ENCODE measurements at regions of chr1 and their contacts with region 1.

Region 1: GRCh38 chr1:206106328-206107167 is 10.6 kb downstream of the AVPR1B start:
- DNase-seq: peak; percentile 88
- ATAC-seq: peak; percentile 95
- H3K4me3 Mint-ChIP-seq: no peak overlapping the region
- H3K27ac Mint-ChIP-seq: no peak overlapping the region
- H3K4me1 Mint-ChIP-seq: no peaks in the 10 kb centered on the region
- H3K27me3 Mint-ChIP-seq: no peaks in the 10 kb centered on the region
- CTCF ChIP-seq: peak; percentile 85

Region 2: DNA sequence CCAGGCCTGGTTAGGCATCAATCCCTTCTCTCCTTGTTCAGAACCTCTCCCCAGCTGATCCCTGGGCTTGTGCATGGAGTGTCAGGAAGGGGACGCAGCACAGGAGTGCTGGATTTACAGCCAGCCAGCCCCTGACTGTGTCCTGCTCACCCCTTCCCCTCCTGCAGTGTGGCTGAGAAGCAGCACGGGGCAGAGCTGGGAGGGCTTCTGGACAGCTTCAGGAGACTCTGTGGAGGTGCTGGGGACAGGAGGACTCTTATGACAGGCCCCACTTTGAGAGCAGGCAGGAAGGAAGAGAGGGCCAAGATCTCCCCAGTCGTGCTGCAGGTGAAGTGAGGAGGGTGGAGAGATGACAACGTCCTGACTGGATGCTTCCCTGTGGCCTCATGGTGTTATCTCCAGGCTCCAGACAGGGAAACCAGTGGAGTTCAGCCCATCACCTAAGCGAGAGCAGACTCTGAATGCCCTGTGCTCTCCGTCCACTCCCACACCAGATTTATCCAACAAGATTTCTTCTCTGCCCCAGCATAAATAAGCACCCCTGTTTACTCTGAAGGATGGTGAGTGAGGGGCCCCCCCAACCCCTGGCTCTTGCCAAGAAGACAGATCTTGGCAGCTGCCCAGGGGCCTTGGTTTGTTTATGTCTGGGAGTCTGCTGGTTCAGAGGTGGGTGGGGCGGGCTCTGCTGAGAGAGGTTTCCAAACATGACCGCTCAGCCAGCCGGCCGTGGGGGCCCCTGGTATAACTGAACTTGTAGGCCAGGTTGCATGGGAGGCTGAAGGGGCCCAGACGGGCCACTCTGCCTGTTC is 857.6 kb before region 1 on chr1:
- CTCF ChIA-PET with region 1: no interaction called
- POLR2A ChIA-PET with region 1: no interaction called
- intact Hi-C with region 1: no loop called
- DNase-seq: no peak
- ATAC-seq: no peak
- H3K4me3 Mint-ChIP-seq: no peak overlapping the region
- H3K27ac Mint-ChIP-seq: no peak overlapping the region
- H3K4me1 Mint-ChIP-seq: peaks cover 6% of the 10 kb centered on the region
- H3K27me3 Mint-ChIP-seq: no peaks in the 10 kb centered on the region
- CTCF ChIP-seq: no peak

Region 3: DNA sequence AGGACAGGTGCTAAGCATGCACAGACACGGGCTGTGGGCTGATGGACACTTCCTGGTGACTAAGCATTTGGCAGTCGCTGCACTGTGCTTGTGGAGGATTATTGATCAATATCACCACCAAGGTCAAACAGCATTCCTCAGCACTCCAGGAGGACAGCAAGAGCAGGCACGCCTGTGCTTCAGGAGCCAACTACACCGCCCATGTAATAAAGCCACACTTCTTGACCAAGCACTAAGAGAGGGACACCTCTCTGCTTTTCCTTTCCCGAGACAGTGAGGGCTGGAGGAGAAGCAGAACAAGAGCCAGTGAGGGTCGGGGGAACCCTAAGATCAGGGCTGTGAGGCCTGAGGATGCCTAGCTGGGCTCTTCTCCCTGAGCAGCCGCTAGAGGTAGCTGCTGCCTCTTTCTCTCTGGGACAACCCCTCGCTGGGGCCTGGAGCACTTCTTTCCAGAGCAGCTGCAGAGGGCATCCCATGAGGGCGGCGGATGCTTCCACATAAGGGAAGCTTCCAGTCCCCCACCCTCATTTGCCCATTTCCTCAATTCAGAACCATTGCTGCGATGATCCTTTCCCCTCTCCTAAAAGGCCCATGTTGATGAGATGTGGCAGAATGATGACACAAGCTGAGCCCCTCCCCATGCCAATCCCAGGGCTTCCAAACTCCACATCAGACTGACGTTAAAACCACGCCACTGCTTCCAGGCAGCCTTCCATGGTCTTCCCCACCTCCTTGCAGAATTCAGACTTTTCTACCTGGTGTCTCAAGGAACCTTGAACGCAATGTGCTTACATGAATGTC is 122.4 kb before region 1 on chr1:
- CTCF ChIA-PET with region 1: interaction called, 86 read pairs
- POLR2A ChIA-PET with region 1: no interaction called
- intact Hi-C with region 1: loop called (anchors 5 kb)
- DNase-seq: peak; percentile 59
- ATAC-seq: peak; percentile 77
- H3K4me3 Mint-ChIP-seq: no peak overlapping the region
- H3K27ac Mint-ChIP-seq: no peak overlapping the region
- H3K4me1 Mint-ChIP-seq: no peaks in the 10 kb centered on the region
- H3K27me3 Mint-ChIP-seq: no peaks in the 10 kb centered on the region
- CTCF ChIP-seq: peak; percentile 46

Region 4: GRCh38 chr1:206041640-206042039 is 64.9 kb before region 1 on chr1:
- CTCF ChIA-PET with region 1: interaction called, 11 read pairs
- POLR2A ChIA-PET with region 1: no interaction called
- intact Hi-C with region 1: no loop called
- DNase-seq: no peak
- ATAC-seq: no peak
- H3K4me3 Mint-ChIP-seq: no peak overlapping the region
- H3K27ac Mint-ChIP-seq: no peak overlapping the region
- H3K4me1 Mint-ChIP-seq: peaks cover 10% of the 10 kb centered on the region
- H3K27me3 Mint-ChIP-seq: peaks cover 10% of the 10 kb centered on the region
- CTCF ChIP-seq: no peak

Region 5: DNA sequence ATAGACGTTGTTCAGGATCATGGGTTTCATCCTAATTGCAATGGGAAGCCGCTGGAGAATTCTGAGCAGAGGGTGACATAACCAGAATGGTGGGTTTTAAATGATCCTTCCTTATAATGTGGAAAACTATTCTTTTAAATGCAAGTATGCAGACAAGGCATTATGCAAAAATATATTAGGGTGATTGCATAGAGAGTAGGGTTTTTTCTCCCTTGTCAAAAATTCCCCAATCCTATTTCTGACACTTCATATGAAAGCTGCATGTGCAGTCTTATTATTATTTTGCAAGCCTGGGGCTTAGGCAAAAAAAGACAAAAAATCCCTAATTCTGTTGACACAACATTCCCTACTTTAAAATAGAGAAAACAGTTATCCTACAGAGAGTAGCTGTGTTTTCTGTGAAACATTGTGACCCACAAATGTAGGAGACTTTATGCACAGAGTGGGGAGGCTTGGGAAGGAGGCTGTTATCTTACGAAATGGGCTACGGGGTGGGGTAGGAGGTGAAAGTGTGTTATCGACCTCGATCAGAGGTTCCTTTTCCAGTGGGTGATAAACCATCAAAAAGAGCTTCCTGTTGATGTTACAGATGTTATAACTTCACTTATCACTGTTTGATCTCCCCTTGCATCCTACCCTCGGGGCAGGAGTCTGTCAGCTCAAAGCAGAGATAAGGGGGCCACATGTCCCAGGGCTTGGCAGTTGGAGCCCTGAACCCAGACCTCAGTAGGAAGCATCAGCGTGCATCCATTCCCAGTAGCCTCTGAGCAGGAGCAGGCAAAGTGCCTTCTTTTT is 26.3 kb before region 1 on chr1:
- CTCF ChIA-PET with region 1: interaction called, 13 read pairs
- POLR2A ChIA-PET with region 1: no interaction called
- intact Hi-C with region 1: no loop called
- DNase-seq: no peak
- ATAC-seq: no peak
- H3K4me3 Mint-ChIP-seq: no peak overlapping the region
- H3K27ac Mint-ChIP-seq: no peak overlapping the region
- H3K4me1 Mint-ChIP-seq: peaks cover 10% of the 10 kb centered on the region
- H3K27me3 Mint-ChIP-seq: peaks cover 4% of the 10 kb centered on the region
- CTCF ChIP-seq: no peak